ENCODE measurements at regions of chr2 and their contacts with region 1.

Region 1: GRCh38 chr2:28610583-28611201 is 114.8 kb downstream of the PLB1 start:
- DNase-seq: peak; percentile 84 to 95
- ATAC-seq: peak; percentile 95
- H3K4me3 ChIP-seq: no peak overlapping the region
- H3K27ac ChIP-seq: peak overlapping the region; percentile 69 to 82
- H3K4me1 ChIP-seq: peaks cover 19% of the 10 kb centered on the region
- CTCF ChIP-seq: no peak
- EP300 ChIP-seq: peak in 1 of 2 experiments; percentile 33; a peak in 1 of 5 replicates
- POLR2A ChIP-seq: no peak
- RAD21 ChIP-seq: peak in 1 of 2 experiments; percentile 32; a peak in 1 of 5 replicates

Region 2: DNA sequence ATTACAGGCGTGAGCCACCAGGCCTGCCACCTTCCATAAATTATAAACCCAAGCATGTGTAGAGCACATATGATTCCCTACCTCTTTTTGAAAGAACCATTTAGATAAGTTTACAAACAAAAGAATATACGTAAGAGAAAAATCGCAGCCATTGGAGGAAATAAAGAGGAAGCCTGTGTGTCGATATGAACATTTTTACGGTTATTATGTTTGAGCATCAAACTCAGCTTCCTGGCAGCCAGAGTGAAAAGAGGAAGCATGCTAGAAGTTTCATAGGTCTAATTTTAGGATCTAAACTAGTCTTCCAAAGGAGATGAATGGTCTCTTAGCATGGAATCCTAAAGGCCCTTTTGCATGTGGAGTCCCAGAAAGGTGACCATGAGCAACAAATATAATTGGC is 10.5 kb before region 1 on chr2:
- CTCF ChIA-PET with region 1: interaction called, 159 read pairs
- POLR2A ChIA-PET with region 1: no interaction called
- DNase-seq: no peak
- ATAC-seq: no peak
- H3K4me3 ChIP-seq: no peak overlapping the region
- H3K27ac ChIP-seq: no peak overlapping the region
- H3K4me1 ChIP-seq: peaks cover 14% of the 10 kb centered on the region
- CTCF ChIP-seq: no peak
- EP300 ChIP-seq: no peak
- POLR2A ChIP-seq: no peak
- RAD21 ChIP-seq: no peak

Measured in A549 (cell line).